ENCODE measurements at regions of chr3 and their contacts with region 1.

Region 1: GRCh38 chr3:30437171-30437601 is 169.2 kb upstream of the TGFBR2 start:
- DNase-seq: no peak
- H3K4me3 ChIP-seq: no peak overlapping the region
- H3K27ac ChIP-seq: peak overlapping the region; percentile 80 to 89 (median 84)
- H3K4me1 ChIP-seq: peaks cover 16 to 64% (median 64%) of the 10 kb centered on the region in 4 donors
- H3K27me3 ChIP-seq: no peaks in the 10 kb centered on the region
- CTCF ChIP-seq: peak in 2 of 3 experiments; percentile 14 to 23
- EP300 ChIP-seq: no peak
- POLR2A ChIP-seq: no peak

Region 2: DNA sequence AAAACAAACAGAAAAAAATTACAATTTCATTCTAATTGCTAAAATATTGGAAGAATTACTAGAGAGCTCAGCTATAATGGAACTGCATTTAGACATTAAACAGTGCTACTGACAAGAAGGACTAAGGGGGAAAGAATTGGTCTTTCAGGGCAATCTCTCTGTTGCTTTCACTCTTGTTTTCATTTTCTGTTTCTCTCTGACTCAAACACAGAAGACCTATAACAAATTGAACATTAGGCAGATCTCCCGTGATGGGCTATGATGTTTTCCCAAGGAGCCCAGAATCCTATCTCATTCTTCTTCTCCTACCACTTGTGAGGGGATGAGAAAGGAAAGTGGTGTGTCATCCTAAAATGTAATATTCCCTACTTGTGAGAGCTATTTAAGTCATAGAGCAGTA is 188.8 kb before region 1 on chr3:
- intact Hi-C with region 1: no loop called
- DNase-seq: no peak
- H3K4me3 ChIP-seq: no peak overlapping the region
- H3K27ac ChIP-seq: no peak overlapping the region
- H3K4me1 ChIP-seq: no peaks in the 10 kb centered on the region
- H3K27me3 ChIP-seq: no peaks in the 10 kb centered on the region
- CTCF ChIP-seq: no peak
- EP300 ChIP-seq: no peak
- POLR2A ChIP-seq: no peak

Region 3: DNA sequence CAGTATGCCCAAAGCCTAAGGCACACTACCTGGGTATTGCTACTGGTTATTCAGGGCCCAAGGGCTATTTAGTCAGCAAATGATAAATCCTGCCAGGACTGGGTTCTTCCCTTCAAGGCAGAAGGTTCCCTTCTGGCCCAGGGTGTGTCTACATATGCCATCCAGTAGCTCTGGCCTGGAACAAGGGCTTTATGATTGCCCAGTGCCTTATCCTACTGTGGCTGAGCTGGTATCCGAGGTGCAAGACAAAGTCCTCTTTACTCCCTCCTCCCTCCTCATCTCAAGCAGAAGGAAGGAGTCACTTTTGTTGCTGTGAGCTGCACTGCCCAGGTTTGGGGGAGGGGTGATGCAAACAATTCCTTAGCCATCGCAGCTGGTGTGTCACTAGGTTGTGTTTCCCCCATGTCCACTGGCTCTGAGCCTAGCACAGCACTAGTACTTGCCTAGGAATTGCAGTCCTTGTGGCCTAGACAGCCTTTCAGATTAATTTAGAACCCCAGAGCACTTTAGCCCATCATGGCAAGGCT is 52.6 kb before region 1 on chr3:
- intact Hi-C with region 1: no loop called
- DNase-seq: no peak
- H3K4me3 ChIP-seq: no peak overlapping the region
- H3K27ac ChIP-seq: no peak overlapping the region
- H3K4me1 ChIP-seq: no peaks in the 10 kb centered on the region
- H3K27me3 ChIP-seq: no peaks in the 10 kb centered on the region
- CTCF ChIP-seq: no peak
- EP300 ChIP-seq: no peak
- POLR2A ChIP-seq: no peak

Region 4: DNA sequence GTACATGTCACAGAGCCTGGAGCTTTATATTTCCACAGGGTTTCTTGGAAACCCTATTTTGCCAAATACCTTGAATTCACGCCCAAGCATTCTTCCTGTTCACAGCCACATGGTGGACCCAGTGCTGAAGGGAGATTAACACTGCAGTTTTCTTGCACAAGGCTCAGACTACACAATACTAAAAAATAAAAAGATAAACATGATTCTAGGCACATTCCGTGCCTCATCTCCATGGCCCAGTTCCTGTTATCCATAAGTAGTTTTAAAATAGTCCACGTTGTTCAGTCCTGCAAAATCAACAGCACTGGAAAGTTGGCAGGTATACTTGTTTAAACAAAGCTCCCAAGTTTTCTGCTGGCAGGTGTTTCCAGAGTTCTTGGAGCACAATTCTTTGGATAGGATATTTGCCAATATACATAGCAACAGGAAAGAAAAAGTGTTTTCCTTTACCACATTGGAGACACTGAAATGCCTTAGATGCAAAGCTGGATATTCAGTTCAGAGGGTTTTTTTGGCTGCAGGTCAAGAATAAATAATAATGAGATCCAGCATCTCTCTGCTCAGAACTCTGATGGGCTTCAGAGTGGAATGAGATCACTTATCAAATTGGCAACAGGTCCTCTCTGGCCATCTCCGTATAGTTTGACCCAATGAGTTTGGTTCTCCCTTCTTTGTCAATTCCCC is 81.1 kb after region 1 on chr3:
- intact Hi-C with region 1: loop called (anchors 2 kb)
- DNase-seq: no peak
- H3K4me3 ChIP-seq: no peak overlapping the region
- H3K27ac ChIP-seq: peak overlapping the region; percentile 79 to 86 (median 80)
- H3K4me1 ChIP-seq: peaks cover 15 to 70% (median 67%) of the 10 kb centered on the region in 4 donors
- H3K27me3 ChIP-seq: no peaks in the 10 kb centered on the region
- CTCF ChIP-seq: peak in 2 of 3 experiments; percentile 23 to 48
- EP300 ChIP-seq: peak; percentile 93
- POLR2A ChIP-seq: no peak

Region 5: GRCh38 chr3:30606301-30607031 is 169.3 kb after region 1 on chr3 and contains the start of gene TGFBR2:
- intact Hi-C with region 1: loop called (anchors 5 kb)
- DNase-seq: peak; percentile 99
- H3K4me3 ChIP-seq: peak within 1 kb of the TSS; percentile 79 to 96 (median 94)
- H3K27ac ChIP-seq: peak within 1 kb of the TSS; percentile 91 to 99 (median 99)
- H3K4me1 ChIP-seq: peaks cover 21 to 54% (median 42%) of the 10 kb centered on the region in 4 donors
- H3K27me3 ChIP-seq: no peaks in the 10 kb centered on the region
- CTCF ChIP-seq: peak; percentile 17 to 40 (median 30)
- EP300 ChIP-seq: no peak
- POLR2A ChIP-seq: peak; percentile 54
- total RNA-seq, gene TGFBR2: 202 to 292 (median 261) TPM